Naive thymus-derived CD4-positive, alpha-beta T cell (primary cell): ENCODE measurements at regions of chr22 and their contacts with region 1.

Region 1: DNA sequence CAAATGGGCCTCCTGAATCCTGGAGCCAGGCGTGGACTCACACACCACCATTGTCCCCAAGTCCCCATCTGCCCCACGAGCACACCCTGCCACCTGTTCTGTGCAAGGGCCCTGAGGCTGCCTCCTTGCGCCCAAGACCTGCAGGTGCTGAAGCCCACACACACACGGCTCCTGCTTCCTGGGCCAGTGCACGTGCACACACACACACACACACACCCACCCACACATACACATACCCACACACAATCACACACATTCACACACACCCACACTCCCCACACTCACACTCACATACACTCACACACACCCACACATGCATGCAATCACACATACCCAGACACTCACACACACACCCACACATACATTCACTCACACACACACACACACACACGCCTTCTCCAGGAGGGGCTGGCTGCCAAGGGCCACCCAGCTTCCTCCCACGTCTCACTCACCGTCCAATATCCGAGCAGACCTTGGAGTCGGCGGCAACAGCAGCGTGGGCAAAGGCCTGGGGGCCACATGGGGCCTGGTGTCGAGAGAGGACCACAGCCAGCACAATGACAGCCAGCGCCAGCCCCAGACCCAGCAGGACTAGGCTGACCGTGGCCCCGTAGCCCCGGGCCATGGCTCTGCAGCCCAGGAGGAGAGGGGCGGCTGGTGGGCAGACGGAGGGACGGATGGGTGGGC is 638 bp downstream of the GGT5 start:
- DNase-seq: no peak
- ATAC-seq: no peak
- H3K4me3 ChIP-seq: no peak overlapping the region
- H3K4me3 Mint-ChIP-seq: peak overlapping the region; percentile 19 to 89 (median 58)
- H3K27ac ChIP-seq: no peak overlapping the region
- H3K27ac Mint-ChIP-seq: peak overlapping the region; percentile 19 to 84 (median 62)
- H3K4me1 ChIP-seq: peaks cover 15 to 28% of the 10 kb centered on the region in 2 donors
- H3K4me1 Mint-ChIP-seq: peaks cover 25 to 47% (median 43%) of the 10 kb centered on the region in 7 donors
- H3K27me3 ChIP-seq: no peaks in the 10 kb centered on the region
- H3K27me3 Mint-ChIP-seq: no peaks in the 10 kb centered on the region

Region 2: DNA sequence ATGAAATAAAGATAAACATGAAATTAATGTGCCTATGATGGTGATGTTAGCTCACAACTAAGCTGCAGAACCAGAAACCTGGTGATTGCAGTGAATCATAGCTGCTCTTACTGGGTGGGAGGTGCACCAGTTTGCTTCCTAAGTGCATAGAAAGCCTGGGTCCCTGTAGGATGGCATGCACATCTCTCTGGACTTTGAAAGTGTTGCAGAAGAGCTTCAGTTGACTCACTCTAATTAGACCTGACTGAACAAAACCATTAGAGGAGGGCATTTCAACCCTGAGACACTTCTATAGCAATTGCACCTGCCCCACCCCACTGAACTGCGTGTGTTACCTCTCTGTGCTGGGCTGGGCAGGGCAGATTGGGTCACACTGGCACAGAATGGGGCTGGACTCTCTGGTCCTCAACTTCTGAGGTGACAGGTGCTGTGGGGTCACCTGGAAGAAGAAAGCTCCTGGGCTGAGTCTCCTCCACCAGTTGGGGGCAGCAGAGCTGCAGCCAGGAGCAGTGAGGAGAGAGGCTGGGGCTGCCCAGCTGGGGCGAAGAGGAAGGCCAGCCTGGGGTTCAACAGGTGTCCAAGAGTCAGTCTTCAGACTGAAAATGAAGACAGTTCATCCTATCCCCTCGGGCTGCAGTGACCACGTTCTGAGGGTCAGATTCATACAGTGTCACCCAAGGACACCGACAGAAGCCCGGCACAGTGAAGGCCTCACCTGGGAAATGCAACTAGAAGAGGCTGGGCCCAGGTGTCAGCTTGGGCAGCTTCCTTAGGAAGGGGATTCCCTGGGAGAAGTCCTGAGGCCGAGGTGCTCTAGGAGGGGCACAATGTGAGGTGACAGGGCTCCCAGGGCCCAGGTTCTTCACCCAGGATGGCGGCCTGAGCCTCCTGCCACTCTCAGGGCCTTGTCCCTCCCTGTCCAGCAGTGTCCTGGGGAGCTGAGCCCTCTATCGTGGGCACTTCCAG is 1541.7 kb before region 1 on chr22:
- CTCF ChIA-PET with region 1: no interaction called
- POLR2A ChIA-PET with region 1: no interaction called
- intact Hi-C with region 1: no loop called
- DNase-seq: no peak
- ATAC-seq: no peak
- H3K4me3 ChIP-seq: no peak overlapping the region
- H3K4me3 Mint-ChIP-seq: no peak overlapping the region
- H3K27ac ChIP-seq: no peak overlapping the region
- H3K27ac Mint-ChIP-seq: no peak overlapping the region
- H3K4me1 ChIP-seq: no peaks in the 10 kb centered on the region
- H3K4me1 Mint-ChIP-seq: no peaks in the 10 kb centered on the region
- H3K27me3 ChIP-seq: no peaks in the 10 kb centered on the region
- H3K27me3 Mint-ChIP-seq: peaks cover 0 to 5% (median 0%) of the 10 kb centered on the region in 5 donors

Region 3: DNA sequence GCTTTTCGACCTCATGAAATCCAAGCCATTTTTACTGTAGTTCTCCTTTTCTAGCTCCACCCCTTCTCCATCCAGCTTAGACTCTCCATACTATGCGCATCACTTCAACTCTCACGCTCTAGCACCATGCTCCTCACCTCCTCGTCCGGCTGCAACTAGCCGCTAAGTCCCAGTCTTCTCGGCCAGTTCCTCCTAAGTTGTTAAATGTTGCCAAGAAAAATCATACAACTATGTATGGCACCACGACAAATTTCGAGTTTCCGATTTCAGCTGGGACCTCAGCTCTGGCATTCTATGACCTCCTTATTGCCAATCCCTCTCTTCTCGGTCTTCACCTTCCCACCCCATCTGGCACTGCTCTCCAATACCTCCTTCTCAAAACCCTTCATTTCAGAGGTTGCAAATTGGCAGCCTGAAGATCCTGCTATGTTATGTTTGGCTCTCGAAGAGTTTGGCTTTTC is 494.4 kb before region 1 on chr22:
- CTCF ChIA-PET with region 1: no interaction called
- POLR2A ChIA-PET with region 1: no interaction called
- intact Hi-C with region 1: no loop called
- DNase-seq: no peak
- ATAC-seq: no peak
- H3K4me3 ChIP-seq: no peak overlapping the region
- H3K4me3 Mint-ChIP-seq: peak overlapping the region; percentile 63 to 88 (median 82)
- H3K27ac ChIP-seq: no peak overlapping the region
- H3K27ac Mint-ChIP-seq: peak overlapping the region in 5 of 9 donors; percentile 37 to 78 (median 65)
- H3K4me1 ChIP-seq: peaks cover 0 to 9% of the 10 kb centered on the region in 2 donors
- H3K4me1 Mint-ChIP-seq: peaks cover 11 to 18% (median 13%) of the 10 kb centered on the region in 7 donors
- H3K27me3 ChIP-seq: no peaks in the 10 kb centered on the region
- H3K27me3 Mint-ChIP-seq: no peaks in the 10 kb centered on the region

Region 4: GRCh38 chr22:24106385-24107381 is 137.6 kb before region 1 on chr22:
- CTCF ChIA-PET with region 1: no interaction called
- POLR2A ChIA-PET with region 1: no interaction called
- intact Hi-C with region 1: loop called in 1 of 2 experiments (anchors 1 kb)
- DNase-seq: peak in 7 of 9 donors; percentile 26 to 39 (median 30)
- ATAC-seq: peak; percentile 68
- H3K4me3 ChIP-seq: no peak overlapping the region
- H3K4me3 Mint-ChIP-seq: no peak overlapping the region
- H3K27ac ChIP-seq: peak overlapping the region; percentile 14
- H3K27ac Mint-ChIP-seq: peak overlapping the region in 8 of 9 donors; percentile 25 to 92 (median 46)
- H3K4me1 ChIP-seq: no peaks in the 10 kb centered on the region
- H3K4me1 Mint-ChIP-seq: peaks cover 0 to 24% (median 4%) of the 10 kb centered on the region in 7 donors
- H3K27me3 ChIP-seq: no peaks in the 10 kb centered on the region
- H3K27me3 Mint-ChIP-seq: no peaks in the 10 kb centered on the region

Region 5: GRCh38 chr22:24133187-24133965 is 110.9 kb before region 1 on chr22:
- CTCF ChIA-PET with region 1: interaction called, 4 read pairs
- POLR2A ChIA-PET with region 1: no interaction called
- intact Hi-C with region 1: loop called in 1 of 2 experiments (anchors 1 kb)
- DNase-seq: peak in 7 of 9 donors; percentile 43 to 65 (median 57)
- ATAC-seq: peak; percentile 62
- H3K4me3 ChIP-seq: no peak overlapping the region
- H3K4me3 Mint-ChIP-seq: peak overlapping the region in 8 of 10 donors; percentile 2 to 79 (median 60)
- H3K27ac ChIP-seq: peak overlapping the region; percentile 62
- H3K27ac Mint-ChIP-seq: peak overlapping the region; percentile 56 to 95 (median 89)
- H3K4me1 ChIP-seq: peaks cover 6 to 18% of the 10 kb centered on the region in 2 donors
- H3K4me1 Mint-ChIP-seq: peaks cover 18 to 33% (median 29%) of the 10 kb centered on the region in 7 donors
- H3K27me3 ChIP-seq: no peaks in the 10 kb centered on the region
- H3K27me3 Mint-ChIP-seq: no peaks in the 10 kb centered on the region

Region 6: GRCh38 chr22:24189249-24190158 is 54.7 kb before region 1 on chr22:
- CTCF ChIA-PET with region 1: interaction called, 3 read pairs
- POLR2A ChIA-PET with region 1: no interaction called
- intact Hi-C with region 1: loop called in 1 of 2 experiments (anchors 1 kb)
- DNase-seq: peak in 7 of 9 donors; percentile 25 to 70 (median 44)
- ATAC-seq: peak; percentile 82
- H3K4me3 ChIP-seq: no peak overlapping the region
- H3K4me3 Mint-ChIP-seq: no peak overlapping the region
- H3K27ac ChIP-seq: no peak overlapping the region
- H3K27ac Mint-ChIP-seq: peak overlapping the region in 1 of 9 donors; percentile 90
- H3K4me1 ChIP-seq: no peaks in the 10 kb centered on the region
- H3K4me1 Mint-ChIP-seq: peaks cover 0 to 11% (median 0%) of the 10 kb centered on the region in 7 donors
- H3K27me3 ChIP-seq: no peaks in the 10 kb centered on the region
- H3K27me3 Mint-ChIP-seq: no peaks in the 10 kb centered on the region

Region 7: GRCh38 chr22:24208012-24208749 is 36.1 kb before region 1 on chr22:
- CTCF ChIA-PET with region 1: no interaction called
- POLR2A ChIA-PET with region 1: no interaction called
- intact Hi-C with region 1: loop called in 1 of 2 experiments (anchors 5 kb)
- DNase-seq: peak in 1 of 9 donors; percentile 5
- ATAC-seq: peak; percentile 80
- H3K4me3 ChIP-seq: no peak overlapping the region
- H3K4me3 Mint-ChIP-seq: peak overlapping the region in 8 of 10 donors; percentile 11 to 60 (median 51)
- H3K27ac ChIP-seq: no peak overlapping the region
- H3K27ac Mint-ChIP-seq: peak overlapping the region; percentile 37 to 94 (median 59)
- H3K4me1 ChIP-seq: peaks cover 0 to 11% of the 10 kb centered on the region in 2 donors
- H3K4me1 Mint-ChIP-seq: peaks cover 14 to 44% (median 19%) of the 10 kb centered on the region in 7 donors
- H3K27me3 ChIP-seq: no peaks in the 10 kb centered on the region
- H3K27me3 Mint-ChIP-seq: no peaks in the 10 kb centered on the region

Region 8: GRCh38 chr22:24355574-24355973 is 111.3 kb after region 1 on chr22:
- CTCF ChIA-PET with region 1: no interaction called
- POLR2A ChIA-PET with region 1: no interaction called
- intact Hi-C with region 1: no loop called
- DNase-seq: no peak
- ATAC-seq: peak; percentile 70
- H3K4me3 ChIP-seq: no peak overlapping the region
- H3K4me3 Mint-ChIP-seq: no peak overlapping the region
- H3K27ac ChIP-seq: no peak overlapping the region
- H3K27ac Mint-ChIP-seq: peak overlapping the region in 1 of 9 donors; percentile 7
- H3K4me1 ChIP-seq: no peaks in the 10 kb centered on the region
- H3K4me1 Mint-ChIP-seq: peaks cover 0 to 21% (median 4%) of the 10 kb centered on the region in 7 donors
- H3K27me3 ChIP-seq: no peaks in the 10 kb centered on the region
- H3K27me3 Mint-ChIP-seq: no peaks in the 10 kb centered on the region

Region 9: GRCh38 chr22:25110846-25111578 is 866.8 kb after region 1 on chr22:
- CTCF ChIA-PET with region 1: no interaction called
- POLR2A ChIA-PET with region 1: no interaction called
- intact Hi-C with region 1: no loop called
- DNase-seq: peak; percentile 16 to 73 (median 62)
- ATAC-seq: peak; percentile 83
- H3K4me3 ChIP-seq: peak overlapping the region; percentile 87
- H3K4me3 Mint-ChIP-seq: peak overlapping the region; percentile 84 to 96 (median 92)
- H3K27ac ChIP-seq: peak overlapping the region; percentile 16
- H3K27ac Mint-ChIP-seq: peak overlapping the region; percentile 69 to 95 (median 86)
- H3K4me1 ChIP-seq: peaks cover 5 to 16% of the 10 kb centered on the region in 2 donors
- H3K4me1 Mint-ChIP-seq: peaks cover 13 to 43% (median 19%) of the 10 kb centered on the region in 7 donors
- H3K27me3 ChIP-seq: no peaks in the 10 kb centered on the region
- H3K27me3 Mint-ChIP-seq: no peaks in the 10 kb centered on the region